K562 (cell line): ENCODE measurements at regions of chr12 and their contacts with region 1.

Region 1: GRCh38 chr12:49342066-49342913 is 4.4 kb upstream of the DNAJC22 start:
- DNase-seq: peak; percentile 94 to 96 (median 94)
- ATAC-seq: peak; percentile 87
- H3K4me3 ChIP-seq: peak overlapping the region; percentile 41
- H3K27ac ChIP-seq: no peak overlapping the region
- H3K4me1 ChIP-seq: peaks cover 31 to 62% of the 10 kb centered on the region in 2 experiments
- H3K27me3 ChIP-seq: peaks cover 24 to 26% of the 10 kb centered on the region in 2 experiments; a peak in 4 of 5 replicates
- CTCF ChIP-seq: peak; percentile 98 to 99 (median 98)
- EP300 ChIP-seq: peak; percentile 21; the same call in 1 of the 2 replicates
- POLR2A ChIP-seq: no peak
- RAD21 ChIP-seq: peak; percentile 86 to 94

Region 2: DNA sequence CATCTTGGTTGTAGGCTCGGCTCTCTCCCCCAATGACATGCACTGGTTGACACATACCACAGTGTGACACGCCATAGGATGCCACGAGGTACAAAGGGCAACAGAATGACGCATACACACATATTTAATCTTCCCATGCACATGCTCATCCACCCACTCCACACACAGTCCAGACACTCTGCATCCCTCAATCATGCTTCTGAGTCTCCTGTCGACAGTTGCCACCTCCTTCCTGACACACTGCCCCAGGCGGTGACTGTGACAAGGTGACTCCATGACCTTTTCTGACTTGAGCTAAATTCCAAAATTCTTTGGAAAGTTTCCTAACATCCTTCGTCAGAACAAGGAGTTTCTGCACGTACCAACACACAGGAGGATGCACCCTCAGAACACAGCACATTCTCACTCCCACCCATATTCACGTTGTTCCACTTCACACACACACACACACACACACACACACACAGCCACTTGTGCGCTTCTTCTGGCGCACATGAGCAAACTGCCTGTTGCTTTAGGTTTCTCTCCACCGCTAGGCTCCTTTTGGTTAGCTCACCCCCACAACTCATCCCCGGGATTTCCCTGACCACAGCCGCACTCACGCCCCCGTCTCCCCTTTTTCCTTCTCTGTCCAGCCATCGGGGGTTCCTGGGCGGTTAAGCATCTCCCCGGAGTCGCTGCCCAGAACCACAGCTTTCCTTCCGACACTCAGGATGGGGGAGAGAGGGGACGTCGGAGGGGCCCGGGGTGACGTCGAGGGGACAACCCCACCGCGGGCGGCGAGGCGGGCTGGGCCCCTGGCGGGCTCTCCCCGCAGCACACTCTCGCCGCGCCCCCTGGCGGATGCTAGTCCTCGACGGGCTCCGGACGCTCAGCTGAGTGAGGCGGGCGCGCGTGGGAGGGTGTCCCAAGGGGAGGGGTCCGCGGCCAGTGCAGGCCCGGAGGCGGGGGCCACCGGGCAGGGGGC is 364.7 kb before region 1 on chr12:
- CTCF ChIA-PET with region 1: no interaction called
- POLR2A ChIA-PET with region 1: no interaction called
- in situ Hi-C with region 1: no loop called
- intact Hi-C with region 1: loop called (anchors 10 kb)
- DNase-seq: peak; percentile 79 to 89 (median 86)
- ATAC-seq: peak; percentile 89
- H3K4me3 ChIP-seq: no peak overlapping the region
- H3K27ac ChIP-seq: no peak overlapping the region
- H3K4me1 ChIP-seq: peaks cover 10 to 56% of the 10 kb centered on the region in 2 experiments; a peak in 4 of 5 replicates
- H3K27me3 ChIP-seq: peaks cover 42 to 49% of the 10 kb centered on the region in 2 experiments; a peak in 4 of 5 replicates
- CTCF ChIP-seq: peak; percentile 69 to 99 (median 90)
- EP300 ChIP-seq: no peak
- POLR2A ChIP-seq: no peak
- RAD21 ChIP-seq: peak; percentile 18 to 52; a peak in 3 of 4 replicates

Region 3: GRCh38 chr12:49069507-49070346 is 272.6 kb before region 1 on chr12 and contains the start of gene RHEBL1:
- CTCF ChIA-PET with region 1: interaction called, 8 read pairs
- POLR2A ChIA-PET with region 1: no interaction called
- in situ Hi-C with region 1: no loop called
- intact Hi-C with region 1: loop called (anchors 10 kb)
- DNase-seq: peak; percentile 99
- ATAC-seq: peak; percentile 100
- H3K4me3 ChIP-seq: peak within 1 kb of the TSS; percentile 96
- H3K27ac ChIP-seq: peak within 1 kb of the TSS; percentile 79
- H3K4me1 ChIP-seq: peaks cover 10 to 18% of the 10 kb centered on the region in 2 experiments; a peak in 4 of 5 replicates
- H3K27me3 ChIP-seq: no peaks in the 10 kb centered on the region
- CTCF ChIP-seq: peak; percentile 43 to 58 (median 57)
- EP300 ChIP-seq: no peak
- POLR2A ChIP-seq: peak; percentile 74
- RAD21 ChIP-seq: no peak
- polyA plus RNA-seq, gene RHEBL1: 27.4 to 36.1 TPM

Region 4: DNA sequence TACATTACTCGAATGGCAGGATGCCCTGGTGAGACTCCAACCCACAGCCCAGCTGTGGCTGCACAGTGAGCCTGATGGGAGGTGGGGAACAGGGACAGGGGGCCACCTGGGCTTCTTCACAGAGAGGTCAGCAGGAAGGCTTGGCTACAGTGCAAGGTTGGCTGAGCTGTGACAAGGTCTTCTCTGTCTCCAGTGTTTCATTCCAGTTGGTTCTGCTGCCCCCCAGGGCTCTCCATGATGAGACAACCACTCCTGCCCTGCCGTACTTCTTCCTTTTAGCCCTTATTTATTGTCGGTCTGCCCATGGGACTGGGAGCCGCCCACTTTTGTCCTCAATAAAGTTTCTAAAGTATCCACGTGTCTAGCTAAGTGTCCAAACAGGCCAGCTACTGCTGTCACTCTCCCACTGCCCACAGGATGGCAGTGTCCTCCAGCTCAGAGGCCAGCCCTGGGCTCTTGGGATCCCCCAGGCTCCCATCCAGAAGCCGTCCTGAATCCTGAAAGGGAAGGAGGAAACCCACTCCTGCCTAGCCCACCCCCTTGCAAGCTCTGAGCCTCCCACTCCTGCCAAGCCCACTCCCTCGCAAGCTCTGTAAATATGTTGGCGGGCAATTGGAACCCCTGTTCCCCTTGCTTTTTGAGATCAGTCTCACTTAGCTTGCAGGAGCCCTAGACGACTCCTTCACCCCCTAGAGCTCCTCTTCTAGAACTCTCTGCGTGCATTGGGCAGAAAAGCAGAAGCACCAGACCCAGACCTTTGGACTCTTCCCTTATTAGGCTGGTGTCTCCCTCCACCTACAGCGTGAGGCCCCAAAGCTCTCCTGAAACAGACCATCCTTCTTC is 10.7 kb before region 1 on chr12:
- CTCF ChIA-PET with region 1: interaction called, 13 read pairs
- POLR2A ChIA-PET with region 1: interaction called, 10 read pairs
- in situ Hi-C with region 1: no loop called
- intact Hi-C with region 1: loop called (anchors 1 kb)
- DNase-seq: peak; percentile 65 to 75 (median 71)
- ATAC-seq: peak; percentile 94
- H3K4me3 ChIP-seq: no peak overlapping the region
- H3K27ac ChIP-seq: no peak overlapping the region
- H3K4me1 ChIP-seq: peaks cover 0 to 22% of the 10 kb centered on the region in 2 experiments; a peak in 2 of 5 replicates
- H3K27me3 ChIP-seq: no peaks in the 10 kb centered on the region
- CTCF ChIP-seq: peak; percentile 90 to 95 (median 94)
- EP300 ChIP-seq: no peak
- POLR2A ChIP-seq: no peak; the same call in 1 of the 2 replicates
- RAD21 ChIP-seq: peak; percentile 75 to 80